HCT116 (cell line): ENCODE measurements at regions of chr18 and their contacts with region 1.

Region 1: DNA sequence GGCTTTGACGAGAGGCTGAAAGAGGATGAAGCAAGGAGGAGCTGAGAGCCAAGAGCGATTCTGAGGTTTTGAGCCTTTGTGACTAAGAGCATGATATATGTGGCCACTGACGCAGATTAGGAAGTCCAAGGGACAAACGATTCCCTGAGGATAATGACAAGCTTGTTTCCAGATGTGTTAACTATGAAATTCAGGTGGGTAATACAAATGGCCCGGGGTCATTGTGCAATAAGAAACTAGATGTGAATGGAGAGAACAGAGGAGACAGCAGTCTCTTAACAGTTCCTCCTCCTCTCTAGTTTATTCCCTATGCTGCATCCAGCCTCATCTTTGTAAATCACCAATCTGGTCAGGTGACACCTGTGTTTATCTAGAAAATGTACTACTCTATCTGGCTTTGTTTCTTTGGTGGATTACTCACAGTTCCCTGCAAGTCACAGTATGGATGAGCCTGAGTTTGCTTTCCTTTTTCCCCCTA is 84.2 kb downstream of the SOCS6 start:
- DNase-seq: peak; percentile 97
- ATAC-seq: peak; percentile 67
- H3K4me3 ChIP-seq: peak overlapping the region in 1 of 2 experiments; percentile 27; a peak in 2 of 4 replicates
- H3K27ac ChIP-seq: peak overlapping the region; percentile 92
- H3K4me1 ChIP-seq: peaks cover 86 to 95% of the 10 kb centered on the region in 2 experiments
- H3K27me3 ChIP-seq: no peaks in the 10 kb centered on the region
- CTCF ChIP-seq: no peak
- POLR2A ChIP-seq: no peak
- RAD21 ChIP-seq: no peak

Region 2: GRCh38 chr18:70181015-70181414 is 192.1 kb before region 1 on chr18:
- CTCF ChIA-PET with region 1: no interaction called
- POLR2A ChIA-PET with region 1: no interaction called
- RAD21 ChIA-PET with region 1: no interaction called
- intact Hi-C with region 1: loop called (anchors 5 kb)
- DNase-seq: peak; percentile 94
- ATAC-seq: peak; percentile 88
- H3K4me3 ChIP-seq: peak overlapping the region in 1 of 2 experiments; percentile 25; a peak in 2 of 4 replicates
- H3K27ac ChIP-seq: peak overlapping the region; percentile 97
- H3K4me1 ChIP-seq: peaks cover 55 to 65% of the 10 kb centered on the region in 2 experiments
- H3K27me3 ChIP-seq: no peaks in the 10 kb centered on the region
- CTCF ChIP-seq: no peak
- POLR2A ChIP-seq: no peak
- RAD21 ChIP-seq: 0 out of 2 replicates have a peak, but pooled peaks have one; percentile 31

Region 3: GRCh38 chr18:70256994-70257393 is 116.1 kb before region 1 on chr18:
- CTCF ChIA-PET with region 1: no interaction called
- POLR2A ChIA-PET with region 1: no interaction called
- RAD21 ChIA-PET with region 1: no interaction called
- intact Hi-C with region 1: no loop called
- DNase-seq: no peak
- ATAC-seq: no peak
- H3K4me3 ChIP-seq: no peak overlapping the region
- H3K27ac ChIP-seq: no peak overlapping the region
- H3K4me1 ChIP-seq: no peaks in the 10 kb centered on the region
- H3K27me3 ChIP-seq: no peaks in the 10 kb centered on the region
- CTCF ChIP-seq: no peak
- POLR2A ChIP-seq: no peak
- RAD21 ChIP-seq: no peak

Region 4: DNA sequence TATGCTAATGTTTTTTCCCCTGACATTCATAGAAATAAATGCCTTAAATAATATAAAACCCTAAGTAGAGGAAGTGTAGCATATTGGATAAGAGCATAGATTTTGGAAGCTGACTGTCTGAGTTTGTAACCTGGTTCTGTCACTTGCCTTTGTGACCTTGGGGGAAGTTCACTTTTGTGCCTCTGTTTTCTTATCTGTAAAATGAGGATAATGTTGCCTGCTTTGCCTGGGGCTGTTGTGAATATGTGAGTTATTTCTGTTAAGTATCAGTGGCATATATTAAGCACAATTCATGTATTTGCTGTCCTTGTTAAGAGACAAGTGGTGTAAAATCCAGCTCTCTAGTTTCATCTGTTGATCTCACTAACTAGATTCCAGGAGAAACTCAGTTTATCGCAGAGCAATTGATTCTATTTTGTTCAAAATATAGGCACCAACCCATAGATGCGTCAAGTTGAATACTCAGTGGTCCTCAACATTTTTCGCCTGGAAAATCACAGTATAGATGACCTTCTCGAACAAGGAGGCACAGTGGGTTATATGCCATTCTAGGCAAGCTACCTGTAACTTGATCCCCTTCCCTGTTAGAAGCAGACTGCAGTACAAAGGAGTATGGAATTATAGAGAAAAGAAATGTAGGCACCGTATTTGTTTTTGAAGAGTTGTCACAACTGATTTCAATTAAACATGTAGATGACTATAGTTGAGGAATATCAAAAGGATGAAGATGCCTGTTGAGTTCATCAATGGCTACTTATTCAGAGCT is 17.3 kb before region 1 on chr18:
- CTCF ChIA-PET with region 1: interaction called, 3 read pairs
- POLR2A ChIA-PET with region 1: interaction called, 15 read pairs
- RAD21 ChIA-PET with region 1: interaction called, 5 read pairs
- intact Hi-C with region 1: no loop called
- DNase-seq: no peak
- ATAC-seq: no peak
- H3K4me3 ChIP-seq: no peak overlapping the region
- H3K27ac ChIP-seq: peak overlapping the region; percentile 98
- H3K4me1 ChIP-seq: peaks cover 43 to 51% of the 10 kb centered on the region in 2 experiments
- H3K27me3 ChIP-seq: no peaks in the 10 kb centered on the region
- CTCF ChIP-seq: no peak
- POLR2A ChIP-seq: no peak
- RAD21 ChIP-seq: no peak

Region 5: DNA sequence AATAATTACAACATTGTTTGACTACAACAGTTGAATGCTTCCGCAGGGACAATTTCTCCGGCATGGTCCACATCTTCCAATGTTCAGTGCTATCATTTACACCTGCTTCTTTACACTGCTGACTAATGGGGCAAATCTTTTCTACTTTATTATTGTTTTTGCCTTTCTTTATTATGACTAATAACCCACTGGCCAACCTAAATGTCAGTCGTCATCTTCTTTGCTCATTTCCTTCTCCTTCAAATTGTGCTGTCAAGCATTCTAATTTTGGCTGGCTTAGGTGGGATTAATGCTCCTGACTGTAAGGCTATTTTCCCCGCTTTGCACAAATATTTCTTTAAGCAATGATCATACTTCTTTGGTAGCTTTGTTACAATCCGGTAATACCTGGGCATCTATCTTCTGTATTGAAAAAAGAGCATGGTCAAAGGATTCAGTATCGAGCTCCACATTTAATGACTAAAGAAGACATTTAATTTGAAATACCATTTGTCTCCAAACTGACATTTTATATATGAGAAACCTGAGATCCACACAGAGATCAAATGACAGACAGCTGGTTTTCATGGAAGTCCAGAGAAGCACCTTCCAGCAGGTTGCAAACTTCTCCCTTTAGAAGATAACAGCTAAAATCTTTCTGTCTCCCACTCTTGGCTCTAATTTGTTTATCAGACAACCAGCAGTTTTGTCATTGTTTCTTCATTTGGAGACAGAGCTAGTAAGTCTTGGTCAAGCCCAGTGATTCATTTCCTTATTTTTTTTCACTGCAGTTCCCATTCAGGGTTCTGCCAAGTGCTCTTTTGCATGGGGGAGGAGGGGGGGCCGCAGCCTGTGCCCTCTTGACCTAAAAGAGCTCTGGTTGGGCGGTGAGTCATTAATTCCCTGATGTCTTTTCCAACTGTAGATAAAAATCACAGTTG is 48.6 kb after region 1 on chr18:
- CTCF ChIA-PET with region 1: no interaction called
- POLR2A ChIA-PET with region 1: interaction called, 24 read pairs
- RAD21 ChIA-PET with region 1: interaction called in 1 of 2 experiments, 4 read pairs
- intact Hi-C with region 1: loop called (anchors 2 kb)
- DNase-seq: peak; percentile 94
- ATAC-seq: peak; percentile 58
- H3K4me3 ChIP-seq: peak overlapping the region in 1 of 2 experiments; percentile 17; a peak in 2 of 4 replicates
- H3K27ac ChIP-seq: peak overlapping the region; percentile 99
- H3K4me1 ChIP-seq: peaks cover 82 to 97% of the 10 kb centered on the region in 2 experiments
- H3K27me3 ChIP-seq: no peaks in the 10 kb centered on the region
- CTCF ChIP-seq: no peak
- POLR2A ChIP-seq: no peak
- RAD21 ChIP-seq: no peak

Region 6: DNA sequence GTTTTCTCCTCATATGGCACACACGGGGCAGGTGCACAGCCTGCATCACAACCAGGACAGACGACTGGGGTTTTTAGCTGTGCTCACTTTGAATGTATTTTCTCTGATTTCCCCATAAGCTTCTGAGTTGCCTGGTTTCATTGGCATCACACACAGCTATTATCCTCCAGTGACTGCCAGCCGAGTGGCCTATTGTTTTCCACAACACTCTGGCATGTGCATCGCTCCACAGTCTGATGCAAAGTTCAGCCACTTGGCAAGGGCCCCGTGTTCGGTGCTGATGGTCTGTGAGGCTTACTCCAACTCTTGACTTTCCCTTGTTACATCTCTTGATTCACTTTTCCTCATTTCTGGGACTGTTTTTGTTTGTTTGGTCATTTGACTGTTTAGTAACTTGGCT is 1577.9 kb after region 1 on chr18:
- CTCF ChIA-PET with region 1: no interaction called
- POLR2A ChIA-PET with region 1: no interaction called
- RAD21 ChIA-PET with region 1: no interaction called
- intact Hi-C with region 1: no loop called
- DNase-seq: no peak
- ATAC-seq: no peak
- H3K4me3 ChIP-seq: no peak overlapping the region
- H3K27ac ChIP-seq: no peak overlapping the region
- H3K4me1 ChIP-seq: no peaks in the 10 kb centered on the region
- H3K27me3 ChIP-seq: no peaks in the 10 kb centered on the region
- CTCF ChIP-seq: no peak
- POLR2A ChIP-seq: no peak
- RAD21 ChIP-seq: no peak